K562 (cell line): ENCODE measurements at regions of chr17 and their contacts with region 1.

Region 1: GRCh38 chr17:46193626-46194392 is 580 bp upstream of the KANSL1 start:
- DNase-seq: peak; percentile 96 to 99 (median 97)
- ATAC-seq: peak; percentile 94
- H3K4me3 ChIP-seq: peak overlapping the region; percentile 85
- H3K27ac ChIP-seq: peak overlapping the region; percentile 90
- H3K4me1 ChIP-seq: peaks cover 12 to 32% of the 10 kb centered on the region in 2 experiments
- H3K27me3 ChIP-seq: no peaks in the 10 kb centered on the region
- CTCF ChIP-seq: peak in 1 of 3 experiments; percentile 26; a peak in 3 of 6 replicates
- EP300 ChIP-seq: no peak
- POLR2A ChIP-seq: peak; percentile 92
- RAD21 ChIP-seq: no peak

Region 2: GRCh38 chr17:46002311-46002972 is 191.4 kb before region 1 on chr17:
- CTCF ChIA-PET with region 1: no interaction called
- POLR2A ChIA-PET with region 1: no interaction called
- in situ Hi-C with region 1: no loop called
- intact Hi-C with region 1: loop called (anchors 2 kb)
- DNase-seq: peak; percentile 74 to 79 (median 76)
- ATAC-seq: peak; percentile 95
- H3K4me3 ChIP-seq: no peak overlapping the region
- H3K27ac ChIP-seq: no peak overlapping the region
- H3K4me1 ChIP-seq: peaks cover 0 to 12% of the 10 kb centered on the region in 2 experiments; a peak in 2 of 5 replicates
- H3K27me3 ChIP-seq: no peaks in the 10 kb centered on the region
- CTCF ChIP-seq: peak; percentile 88 to 91 (median 91)
- EP300 ChIP-seq: no peak
- POLR2A ChIP-seq: no peak
- RAD21 ChIP-seq: peak; percentile 79 to 91

Region 3: DNA sequence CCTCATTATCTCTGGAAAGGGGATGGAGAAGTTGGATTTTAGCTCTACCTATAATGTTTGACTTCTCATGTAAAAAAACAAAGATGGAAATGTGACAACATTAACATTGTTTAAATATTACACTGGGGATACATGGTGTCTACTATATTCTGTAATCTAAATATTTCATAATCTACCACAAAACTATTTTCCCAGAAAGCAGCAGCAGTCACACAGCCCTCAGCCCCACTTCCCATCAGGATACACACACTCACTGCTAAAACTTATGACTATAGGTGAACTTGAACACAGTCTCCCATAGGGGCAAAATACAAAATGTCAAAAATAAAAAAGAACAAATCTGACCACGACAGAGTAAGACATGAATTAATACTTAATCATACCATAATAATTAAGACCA is 96.3 kb before region 1 on chr17:
- CTCF ChIA-PET with region 1: interaction called, 4 read pairs
- POLR2A ChIA-PET with region 1: interaction called, 3 read pairs
- in situ Hi-C with region 1: no loop called
- intact Hi-C with region 1: loop called (anchors 2 kb)
- DNase-seq: no peak
- ATAC-seq: no peak
- H3K4me3 ChIP-seq: no peak overlapping the region
- H3K27ac ChIP-seq: no peak overlapping the region
- H3K4me1 ChIP-seq: peaks cover 16 to 23% of the 10 kb centered on the region in 2 experiments
- H3K27me3 ChIP-seq: no peaks in the 10 kb centered on the region
- CTCF ChIP-seq: no peak
- EP300 ChIP-seq: no peak
- POLR2A ChIP-seq: no peak
- RAD21 ChIP-seq: no peak

Region 4: GRCh38 chr17:46212634-46213435 is 19.0 kb after region 1 on chr17:
- CTCF ChIA-PET with region 1: interaction called, 13 read pairs
- POLR2A ChIA-PET with region 1: interaction called, 12 read pairs
- in situ Hi-C with region 1: no loop called
- intact Hi-C with region 1: loop called (anchors 2 kb)
- DNase-seq: peak; percentile 64 to 82 (median 68)
- ATAC-seq: peak; percentile 93
- H3K4me3 ChIP-seq: no peak overlapping the region
- H3K27ac ChIP-seq: no peak overlapping the region
- H3K4me1 ChIP-seq: peaks cover 0 to 4% of the 10 kb centered on the region in 2 experiments; a peak in 1 of 5 replicates
- H3K27me3 ChIP-seq: no peaks in the 10 kb centered on the region
- CTCF ChIP-seq: peak; percentile 85 to 96 (median 88)
- EP300 ChIP-seq: no peak
- POLR2A ChIP-seq: no peak
- RAD21 ChIP-seq: peak; percentile 88 to 89